ENCODE measurements at regions of chr17 and their contacts with region 1.

Region 1: DNA sequence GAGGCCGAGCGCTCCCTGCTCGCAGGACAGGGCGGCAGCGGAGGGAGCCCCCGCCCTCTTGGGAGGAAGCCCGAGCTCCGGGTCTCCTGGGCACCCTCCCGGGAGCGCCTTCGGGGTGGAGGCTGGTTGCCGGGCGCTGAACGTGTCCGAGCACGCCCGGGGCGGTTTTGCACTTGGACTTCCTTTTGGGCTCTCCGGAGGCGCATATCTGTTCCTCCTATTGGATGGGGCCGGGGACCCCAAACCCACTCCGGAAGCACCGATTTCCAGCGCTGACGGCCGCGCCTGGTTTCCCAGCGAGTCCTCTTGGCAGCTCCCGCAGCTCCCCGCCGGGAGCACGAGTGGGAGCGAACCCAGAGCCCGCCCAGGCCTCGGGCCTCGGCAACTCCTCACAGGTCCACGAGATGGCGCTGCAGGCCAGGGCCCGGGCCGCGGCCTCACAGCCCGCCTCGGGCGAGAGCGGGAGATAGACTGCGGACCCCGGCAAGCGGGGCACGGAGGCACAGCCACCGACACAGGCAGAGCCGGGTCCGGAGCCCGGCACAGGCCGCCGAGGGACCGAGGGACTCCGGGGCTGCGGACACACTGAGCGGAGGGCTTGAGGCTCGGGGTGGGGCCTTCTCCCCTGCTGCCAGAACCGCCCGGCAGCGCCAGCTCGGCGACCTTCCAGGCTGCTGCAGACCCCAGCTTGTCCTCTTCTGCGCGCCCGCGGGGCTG is 12.7 kb downstream of the TBX2 start:
- DNase-seq: peak; percentile 70 to 82
- H3K4me3 ChIP-seq: peak overlapping the region in 2 of 3 donors; percentile 50 to 71
- H3K27ac ChIP-seq: peak overlapping the region; percentile 88 to 92 (median 92)
- H3K4me1 ChIP-seq: peaks cover 12 to 68% of the 10 kb centered on the region in 2 donors
- H3K27me3 ChIP-seq: no peaks in the 10 kb centered on the region
- CTCF ChIP-seq: peak; percentile 75 to 100 (median 98)
- POLR2A ChIP-seq: peak in 1 of 2 donors; percentile 45

Region 2: GRCh38 chr17:61335845-61336655 is 76.3 kb before region 1 on chr17:
- intact Hi-C with region 1: no loop called
- DNase-seq: peak; percentile 58 to 64
- H3K4me3 ChIP-seq: no peak overlapping the region
- H3K27ac ChIP-seq: peak overlapping the region in 2 of 3 donors; percentile 29 to 83
- H3K4me1 ChIP-seq: peaks cover 44 to 71% of the 10 kb centered on the region in 2 donors
- H3K27me3 ChIP-seq: no peaks in the 10 kb centered on the region
- CTCF ChIP-seq: no peak
- POLR2A ChIP-seq: no peak

Region 3: DNA sequence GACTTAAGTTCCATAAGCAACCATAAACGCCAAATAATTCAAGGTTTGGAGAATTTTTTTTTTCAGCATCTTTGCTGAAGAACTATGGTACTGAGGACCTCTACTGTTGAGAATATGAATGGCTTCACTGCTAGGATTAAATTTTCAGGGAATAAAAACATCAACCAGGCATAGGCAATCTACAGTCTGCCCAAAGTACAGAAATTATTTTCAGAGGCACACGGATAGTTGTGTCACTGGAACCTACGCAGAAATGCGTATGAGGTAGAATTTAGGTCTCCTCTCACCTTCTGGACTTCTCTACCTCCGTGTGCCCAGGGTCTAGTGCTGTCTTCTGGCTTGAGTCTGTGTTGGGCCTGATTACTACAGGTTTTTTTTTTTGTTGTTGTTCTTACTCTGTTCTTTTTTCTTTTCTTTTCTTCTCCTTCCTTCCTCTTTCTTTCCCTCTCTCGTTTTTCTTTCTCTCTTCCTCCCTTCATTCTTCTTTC is 139.0 kb after region 1 on chr17:
- intact Hi-C with region 1: loop called (anchors 5 kb)
- DNase-seq: no peak
- H3K4me3 ChIP-seq: no peak overlapping the region
- H3K27ac ChIP-seq: no peak overlapping the region
- H3K4me1 ChIP-seq: no peaks in the 10 kb centered on the region
- H3K27me3 ChIP-seq: no peaks in the 10 kb centered on the region
- CTCF ChIP-seq: peak in 5 of 6 experiments; percentile 13 to 66 (median 58)
- POLR2A ChIP-seq: no peak

Region 4: DNA sequence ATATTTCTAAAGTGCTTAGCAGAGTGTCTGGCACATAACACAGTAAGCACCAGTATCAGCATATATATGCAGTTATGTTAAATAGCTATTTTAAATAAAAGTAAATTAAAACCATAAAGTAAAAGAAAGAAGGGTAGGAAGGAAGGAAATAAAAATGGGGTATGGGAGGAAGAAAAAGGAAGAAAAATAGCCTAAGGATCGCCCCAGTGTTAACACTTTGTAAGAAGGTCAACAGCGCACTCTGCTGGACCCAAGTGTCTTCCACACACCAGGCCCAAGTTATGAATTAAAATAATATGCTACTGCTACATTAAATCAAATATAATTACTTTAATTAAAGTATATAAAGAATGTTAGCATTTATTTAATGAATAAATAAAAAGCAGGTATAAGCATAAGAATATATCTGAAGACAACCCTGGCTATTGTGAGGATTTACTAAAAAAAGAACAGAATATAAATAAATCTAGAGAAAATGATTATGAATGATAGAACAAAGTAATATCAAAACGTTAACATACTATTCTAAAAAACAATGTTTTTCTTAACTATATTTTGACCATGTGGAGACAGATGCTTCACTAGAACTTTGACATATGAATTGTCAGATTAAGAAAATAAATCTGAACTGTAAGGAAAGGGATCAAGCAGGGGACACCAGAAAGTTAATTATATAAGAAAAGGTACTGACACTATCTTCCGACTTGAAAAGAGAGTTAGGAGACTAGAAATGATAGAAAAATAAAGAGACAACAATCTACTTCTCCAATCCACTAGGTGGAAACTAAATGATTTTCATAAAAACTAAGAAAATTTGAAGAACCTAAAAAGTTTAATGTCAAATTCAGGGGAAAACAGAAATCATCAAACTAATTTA is 425.1 kb after region 1 on chr17:
- intact Hi-C with region 1: loop called (anchors 10 kb)
- DNase-seq: peak; percentile 49 to 63
- H3K4me3 ChIP-seq: no peak overlapping the region
- H3K27ac ChIP-seq: no peak overlapping the region
- H3K4me1 ChIP-seq: no peaks in the 10 kb centered on the region
- H3K27me3 ChIP-seq: no peaks in the 10 kb centered on the region
- CTCF ChIP-seq: peak; percentile 16 to 72 (median 58)
- POLR2A ChIP-seq: no peak

Region 5: DNA sequence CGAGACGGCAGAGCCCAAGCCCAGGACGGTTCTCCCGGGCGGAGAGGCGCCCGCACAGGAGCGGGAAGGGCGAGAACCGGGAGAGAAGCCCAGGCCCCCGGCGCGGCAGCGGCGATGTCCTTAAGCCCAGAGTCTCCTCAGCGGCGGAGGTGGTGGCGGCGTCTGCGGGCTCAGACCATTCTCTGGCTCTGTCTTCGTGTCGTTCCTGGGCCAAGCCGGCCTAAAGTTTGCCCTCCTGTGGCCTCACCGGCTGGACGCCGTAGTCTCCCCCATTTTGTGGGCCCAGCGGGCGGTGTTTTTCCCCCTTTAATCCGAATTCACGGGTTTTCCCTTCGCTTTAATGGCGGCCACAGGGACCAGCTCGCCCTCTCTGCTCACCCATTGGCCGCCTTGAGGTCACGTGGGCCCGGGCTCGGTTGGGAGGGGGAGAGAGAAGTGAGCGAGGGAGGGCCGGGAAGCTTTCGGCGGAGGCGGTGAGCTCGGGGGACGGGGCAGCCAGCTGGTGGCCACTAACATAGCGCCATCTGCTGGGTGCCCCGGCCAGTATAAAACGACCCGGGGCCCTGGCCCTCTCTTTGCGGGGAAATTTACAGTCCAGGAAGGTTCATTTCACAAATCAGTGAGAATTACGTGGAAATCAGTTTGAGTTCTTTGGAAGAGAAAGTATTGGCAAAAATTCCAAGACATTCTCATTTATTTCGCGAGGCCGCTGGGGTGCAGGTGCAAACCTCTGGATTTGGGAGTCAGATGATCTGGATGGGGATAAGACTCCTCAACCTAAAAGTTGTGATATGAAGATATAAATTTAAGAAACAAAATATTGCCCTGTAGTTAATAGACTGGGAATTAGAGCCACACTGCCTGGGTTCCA is 653.5 kb after region 1 on chr17:
- intact Hi-C with region 1: loop called (anchors 10 kb)
- DNase-seq: peak; percentile 99
- H3K4me3 ChIP-seq: peak overlapping the region; percentile 76 to 99 (median 81)
- H3K27ac ChIP-seq: peak overlapping the region; percentile 95 to 100 (median 99)
- H3K4me1 ChIP-seq: peaks cover 8 to 28% of the 10 kb centered on the region in 2 donors
- H3K27me3 ChIP-seq: no peaks in the 10 kb centered on the region
- CTCF ChIP-seq: peak; percentile 66 to 95 (median 88)
- POLR2A ChIP-seq: peak in 1 of 2 donors; percentile 90

Measured in thyroid gland (tissue), 4 donors.